Left colon (tissue), 2 donors: ENCODE measurements at regions of chr11 and their contacts with region 1.

Region 1: DNA sequence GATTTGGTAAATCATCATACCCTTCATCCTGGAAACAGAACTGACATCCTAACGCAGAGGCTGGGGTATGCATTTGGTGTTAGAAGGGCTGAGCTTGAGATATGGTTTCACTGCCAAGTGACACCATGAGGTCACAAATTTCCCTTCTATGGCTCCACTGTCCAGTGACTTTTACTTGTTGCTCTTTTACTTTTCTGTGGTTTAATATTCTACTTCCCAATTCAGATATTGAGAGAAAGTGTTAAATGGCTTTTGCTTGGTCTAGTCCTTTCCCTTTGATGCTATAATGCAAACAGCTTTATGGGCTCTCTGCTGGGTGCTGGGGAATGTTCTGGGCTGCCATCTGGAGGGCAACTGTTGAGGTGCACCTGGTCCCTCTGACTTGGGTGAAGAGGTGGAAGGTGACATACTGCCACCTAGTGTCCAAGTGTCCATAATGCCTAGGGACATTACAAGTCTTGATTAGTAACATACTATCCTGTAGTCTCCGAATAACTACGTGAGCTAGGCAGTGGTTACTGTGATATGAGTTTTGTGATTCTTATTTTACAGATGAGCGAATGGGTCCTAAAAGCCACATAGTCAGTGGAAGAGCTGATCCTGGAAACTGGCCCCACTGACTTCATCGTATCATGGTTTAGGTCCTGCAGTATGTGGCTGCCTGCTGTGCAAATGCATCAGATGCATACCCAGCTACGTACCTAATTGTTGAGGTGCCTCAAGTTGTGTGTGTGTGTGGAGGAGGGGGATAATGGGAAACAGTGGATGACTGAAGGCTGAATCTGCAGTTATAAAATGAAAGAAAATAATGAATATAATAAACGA is 149.1 kb upstream of the RAG2 start:
- DNase-seq: peak; percentile 81 to 93
- ATAC-seq: peak; percentile 98

Region 2: DNA sequence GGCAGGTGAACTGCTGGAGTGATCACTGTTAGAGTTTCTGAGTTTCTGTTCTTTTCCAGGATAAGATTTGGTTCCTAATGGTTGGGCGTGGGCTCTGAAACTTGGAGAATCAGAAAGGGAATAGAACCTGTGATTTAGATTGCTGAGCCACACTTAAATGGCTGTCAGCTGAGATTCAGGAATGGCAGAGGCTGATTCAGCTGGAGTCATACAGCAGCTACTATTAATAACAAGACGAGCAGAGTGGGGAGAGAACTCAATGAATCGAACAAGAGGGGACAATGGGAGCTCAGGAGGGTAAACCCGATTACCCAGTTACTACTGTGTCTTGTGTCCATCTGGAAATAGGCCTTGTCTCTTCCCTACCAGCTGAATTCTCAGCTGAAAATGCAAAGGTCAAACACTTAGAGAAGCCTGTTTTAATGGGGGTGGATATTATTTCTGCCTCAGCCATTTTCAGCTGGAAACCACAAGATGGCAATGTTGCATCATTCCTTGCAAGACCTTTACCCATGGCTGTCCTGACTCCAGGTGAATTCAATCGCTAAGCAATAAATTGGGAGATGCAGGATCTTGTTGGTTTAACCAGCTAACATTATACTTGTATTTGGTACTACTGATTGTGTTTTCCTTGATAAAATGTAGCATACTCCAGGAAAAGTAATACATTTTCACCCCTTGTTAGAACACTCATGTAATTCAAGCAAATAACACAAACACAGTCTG is 44.6 kb before region 1 on chr11:
- intact Hi-C with region 1: loop called in 1 of 2 experiments (anchors 2 kb)
- DNase-seq: no peak
- ATAC-seq: peak; percentile 82